Mammary epithelial cell (primary cell): ENCODE measurements at regions of chr2 and their contacts with region 1.

Region 1: GRCh38 chr2:85538486-85539360 is at the start of gene MAT2A:
- DNase-seq: peak; percentile 84
- H3K4me3 ChIP-seq: peak within 1 kb of the TSS; percentile 68 to 100 (median 95)
- H3K27ac ChIP-seq: peak within 1 kb of the TSS; percentile 95
- H3K4me1 ChIP-seq: peaks cover 36% of the 10 kb centered on the region
- H3K27me3 ChIP-seq: no peaks in the 10 kb centered on the region
- CTCF ChIP-seq: peak; percentile 52 to 68
- total RNA-seq, gene MAT2A: 213 to 257 TPM

Region 2: GRCh38 chr2:85354286-85355072 is 184.2 kb before region 1 on chr2 and contains the starts of genes ELMOD3 and RETSAT:
- CTCF ChIA-PET with region 1: no interaction called
- dilution Hi-C with region 1: no loop called
- in situ Hi-C with region 1: no loop called
- intact Hi-C with region 1: loop called (anchors 2 kb)
- DNase-seq: peak; percentile 99
- H3K4me3 ChIP-seq: peak within 1 kb of the TSS; percentile 78 to 95 (median 84)
- H3K27ac ChIP-seq: peak within 1 kb of the TSS; percentile 54
- H3K4me1 ChIP-seq: peaks cover 11% of the 10 kb centered on the region
- H3K27me3 ChIP-seq: no peaks in the 10 kb centered on the region
- CTCF ChIP-seq: no peak
- total RNA-seq, gene ELMOD3: 17.5 to 23.0 TPM
- total RNA-seq, gene RETSAT: 94.7 to 157 TPM

Region 3: GRCh38 chr2:85420536-85421259 is 118.0 kb before region 1 on chr2:
- CTCF ChIA-PET with region 1: no interaction called
- dilution Hi-C with region 1: no loop called
- in situ Hi-C with region 1: loop called in 1 of 2 experiments (anchors 5 kb)
- intact Hi-C with region 1: loop called (anchors 1 kb)
- DNase-seq: peak; percentile 21
- H3K4me3 ChIP-seq: peak overlapping the region in 1 of 3 experiments; percentile 12
- H3K27ac ChIP-seq: no peak overlapping the region
- H3K4me1 ChIP-seq: peaks cover 30% of the 10 kb centered on the region
- H3K27me3 ChIP-seq: no peaks in the 10 kb centered on the region
- CTCF ChIP-seq: peak; percentile 96 to 99

Region 4: GRCh38 chr2:85468704-85469349 is 69.9 kb before region 1 on chr2:
- CTCF ChIA-PET with region 1: interaction called, 8 read pairs
- dilution Hi-C with region 1: no loop called
- in situ Hi-C with region 1: no loop called
- intact Hi-C with region 1: loop called (anchors 1 kb)
- DNase-seq: peak; percentile 69
- H3K4me3 ChIP-seq: no peak overlapping the region
- H3K27ac ChIP-seq: no peak overlapping the region
- H3K4me1 ChIP-seq: peaks cover 29% of the 10 kb centered on the region
- H3K27me3 ChIP-seq: no peaks in the 10 kb centered on the region
- CTCF ChIP-seq: no peak

Region 5: DNA sequence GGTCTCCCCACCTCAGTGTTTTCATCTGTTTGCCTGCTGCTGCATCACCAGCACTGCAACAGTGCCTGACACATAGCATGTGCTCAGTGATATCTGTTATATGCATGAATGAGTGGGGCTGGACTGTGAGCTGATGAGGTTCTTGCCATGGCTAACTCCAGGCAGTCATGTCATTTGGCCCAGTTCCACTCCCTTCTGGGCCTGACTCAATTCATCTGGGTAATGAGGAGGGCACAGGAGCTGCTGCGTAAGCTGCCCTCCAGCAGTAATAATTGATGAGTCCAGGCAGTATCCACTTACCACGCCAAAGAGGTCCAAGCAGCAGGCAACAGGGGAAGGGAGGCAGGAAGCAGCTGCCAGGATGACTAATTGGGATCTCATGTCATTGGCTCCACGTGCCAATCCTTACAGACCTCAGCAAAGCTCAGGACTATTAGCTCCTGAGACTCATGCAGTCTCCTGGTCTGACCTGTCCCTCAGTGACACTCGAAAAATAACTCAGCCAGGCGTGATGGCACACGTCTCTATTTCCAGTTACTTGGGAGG is 33.9 kb before region 1 on chr2:
- CTCF ChIA-PET with region 1: interaction called, 4 read pairs
- dilution Hi-C with region 1: loop called (anchors 5 kb)
- in situ Hi-C with region 1: no loop called
- intact Hi-C with region 1: loop called (anchors 1 kb)
- DNase-seq: peak; percentile 99
- H3K4me3 ChIP-seq: no peak overlapping the region
- H3K27ac ChIP-seq: peak overlapping the region; percentile 73
- H3K4me1 ChIP-seq: peaks cover 41% of the 10 kb centered on the region
- H3K27me3 ChIP-seq: no peaks in the 10 kb centered on the region
- CTCF ChIP-seq: no peak

Region 6: GRCh38 chr2:85516653-85517406 is 21.9 kb before region 1 on chr2:
- CTCF ChIA-PET with region 1: no interaction called
- dilution Hi-C with region 1: no loop called
- in situ Hi-C with region 1: no loop called
- intact Hi-C with region 1: loop called (anchors 2 kb)
- DNase-seq: no peak
- H3K4me3 ChIP-seq: no peak overlapping the region
- H3K27ac ChIP-seq: no peak overlapping the region
- H3K4me1 ChIP-seq: no peaks in the 10 kb centered on the region
- H3K27me3 ChIP-seq: no peaks in the 10 kb centered on the region
- CTCF ChIP-seq: no peak

Region 7: DNA sequence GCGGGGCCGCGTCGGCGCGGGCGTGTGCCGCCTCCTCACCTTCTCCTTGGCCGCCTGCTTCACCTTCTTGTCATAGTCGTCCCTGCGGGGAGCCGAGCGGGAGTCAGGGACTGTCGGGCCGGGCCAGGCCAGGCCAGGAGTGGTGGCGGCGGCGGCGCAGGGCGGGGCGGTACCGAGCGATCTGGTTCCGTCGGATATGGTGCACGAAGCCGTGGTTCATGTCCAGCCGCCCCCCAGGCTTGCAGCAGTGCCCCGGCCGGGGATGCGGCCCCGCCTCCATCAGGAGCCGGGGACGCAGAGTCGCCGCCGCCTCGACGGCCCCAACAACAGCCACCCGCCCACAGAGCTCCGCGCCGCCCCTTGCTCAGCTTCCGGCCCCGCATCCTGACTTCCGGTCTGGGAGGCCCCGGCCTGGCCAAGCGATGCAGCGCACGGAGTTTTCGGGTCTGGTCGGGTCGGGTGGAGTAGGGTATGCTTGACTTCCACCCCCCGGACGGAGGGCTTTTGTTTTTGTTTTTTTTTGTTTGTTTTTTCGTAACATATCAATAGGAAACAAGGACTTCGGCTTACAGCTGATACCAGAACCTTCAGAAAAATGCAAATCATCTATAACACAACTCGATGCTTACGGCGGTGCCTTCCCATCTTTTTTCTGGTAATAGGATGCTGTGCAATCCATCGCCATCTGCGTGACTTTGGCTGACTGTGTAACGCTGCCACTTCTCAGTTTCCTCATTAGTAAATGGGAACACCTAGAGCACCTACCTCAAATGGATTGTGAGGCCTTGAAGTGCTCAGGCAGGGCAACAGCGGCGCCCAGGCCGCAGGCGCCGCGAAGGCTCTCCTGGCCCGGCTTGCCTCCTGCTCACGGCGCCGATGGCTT is 73.2 kb after region 1 on chr2 and contains the start of gene C2orf68:
- CTCF ChIA-PET with region 1: no interaction called
- dilution Hi-C with region 1: no loop called
- in situ Hi-C with region 1: no loop called
- intact Hi-C with region 1: loop called (anchors 2 kb)
- DNase-seq: peak; percentile 79
- H3K4me3 ChIP-seq: peak within 1 kb of the TSS; percentile 60 to 92 (median 78)
- H3K27ac ChIP-seq: peak within 1 kb of the TSS; percentile 66
- H3K4me1 ChIP-seq: peaks cover 10% of the 10 kb centered on the region
- H3K27me3 ChIP-seq: no peaks in the 10 kb centered on the region
- CTCF ChIP-seq: no peak
- total RNA-seq, gene C2orf68: 10.8 to 21.9 TPM